Sigmoid colon (tissue), 7 donors: ENCODE measurements at regions of chr15 and their contacts with region 1.

Region 1: DNA sequence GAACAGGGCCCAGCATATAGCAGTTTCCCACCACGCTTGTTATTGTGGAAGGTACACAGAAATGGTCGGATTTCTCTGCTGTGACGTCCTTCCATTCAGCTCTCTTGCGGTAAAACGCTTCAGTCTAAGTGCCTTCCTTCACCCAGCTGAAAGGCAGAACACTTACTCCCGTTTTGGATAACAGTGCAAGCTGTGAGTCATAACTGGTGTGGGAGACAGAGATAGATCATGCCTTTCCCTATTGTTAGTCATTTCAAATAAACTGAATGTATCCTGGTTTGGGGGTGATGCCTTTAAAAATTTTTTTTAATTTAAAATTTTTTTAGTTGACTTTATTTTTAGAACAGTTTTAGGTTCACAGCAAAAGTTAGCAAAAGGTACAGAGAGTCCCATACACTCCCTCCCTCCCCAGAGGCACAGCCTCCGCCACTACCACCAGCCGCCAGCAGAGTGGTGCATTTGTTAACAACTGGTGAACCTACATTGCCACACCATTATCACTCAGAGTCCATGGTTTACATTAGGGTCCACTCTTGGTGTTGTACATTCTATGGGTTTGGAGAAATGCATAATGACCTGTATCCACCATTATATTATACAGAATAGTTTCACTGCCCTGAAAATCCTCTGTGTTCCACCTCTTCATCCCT is 94.9 kb upstream of the NSMCE3 start:
- DNase-seq: no peak
- H3K4me3 ChIP-seq: no peak overlapping the region
- H3K27ac ChIP-seq: peak overlapping the region in 3 of 4 donors; percentile 16 to 49 (median 27)
- H3K4me1 ChIP-seq: peaks cover 0 to 12% (median 3%) of the 10 kb centered on the region in 4 donors
- H3K27me3 ChIP-seq: no peaks in the 10 kb centered on the region
- CTCF ChIP-seq: peak; percentile 31 to 59 (median 52)
- EP300 ChIP-seq: no peak
- POLR2A ChIP-seq: no peak

Region 2: GRCh38 chr15:29269485-29270168 is 94.9 kb before region 1 on chr15 and contains the start of gene NSMCE3:
- intact Hi-C with region 1: loop called (anchors 5 kb)
- DNase-seq: peak; percentile 96
- H3K4me3 ChIP-seq: peak within 1 kb of the TSS; percentile 71 to 92 (median 76)
- H3K27ac ChIP-seq: peak within 1 kb of the TSS; percentile 88 to 94 (median 92)
- H3K4me1 ChIP-seq: peaks cover 0 to 34% (median 22%) of the 10 kb centered on the region in 4 donors
- H3K27me3 ChIP-seq: no peaks in the 10 kb centered on the region
- CTCF ChIP-seq: no peak
- EP300 ChIP-seq: peak in 1 of 4 donors; percentile 55
- POLR2A ChIP-seq: peak; percentile 90 to 93
- total RNA-seq, gene NSMCE3: 7.8 to 12.8 (median 10.3) TPM

Region 3: GRCh38 chr15:29398907-29399306 is 34.4 kb after region 1 on chr15:
- intact Hi-C with region 1: loop called (anchors 5 kb)
- DNase-seq: no peak
- H3K4me3 ChIP-seq: no peak overlapping the region
- H3K27ac ChIP-seq: no peak overlapping the region
- H3K4me1 ChIP-seq: peaks cover 0 to 53% (median 30%) of the 10 kb centered on the region in 4 donors
- H3K27me3 ChIP-seq: no peaks in the 10 kb centered on the region
- CTCF ChIP-seq: no peak
- EP300 ChIP-seq: no peak
- POLR2A ChIP-seq: no peak

Region 4: DNA sequence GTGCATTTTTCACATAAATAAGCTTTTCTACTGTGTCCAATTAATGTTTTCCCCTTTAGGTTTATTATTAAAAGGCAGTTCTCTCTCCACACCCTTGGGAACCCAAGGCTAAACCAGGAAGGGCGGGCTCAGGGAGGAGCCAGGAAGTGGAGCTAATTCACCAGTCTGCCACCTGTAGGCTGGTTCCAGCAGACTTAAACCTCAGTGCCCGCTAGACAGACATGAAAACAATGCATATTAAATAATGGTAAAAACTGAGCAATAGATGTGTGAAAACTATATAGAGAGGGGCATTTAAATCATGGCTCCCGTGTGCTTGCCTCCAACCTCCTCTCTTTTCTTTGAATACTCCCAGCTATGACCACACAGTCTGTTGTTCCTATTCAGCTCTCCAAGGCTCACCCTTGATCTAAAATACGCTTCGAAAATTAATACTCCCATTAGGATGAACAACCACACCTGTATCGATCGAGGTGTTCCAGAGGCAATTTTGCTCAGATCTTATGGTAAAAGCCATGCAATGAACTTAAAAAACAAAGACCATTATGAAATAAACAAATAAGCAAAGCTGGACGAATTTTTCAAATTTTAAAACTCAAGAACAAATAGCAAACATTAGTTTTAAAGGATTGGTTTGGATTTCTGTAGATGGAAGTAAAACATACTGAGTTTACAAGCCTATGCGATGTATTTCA is 204.4 kb after region 1 on chr15:
- intact Hi-C with region 1: loop called (anchors 10 kb)
- DNase-seq: no peak
- H3K4me3 ChIP-seq: no peak overlapping the region
- H3K27ac ChIP-seq: no peak overlapping the region
- H3K4me1 ChIP-seq: peaks cover 0 to 19% (median 13%) of the 10 kb centered on the region in 4 donors
- H3K27me3 ChIP-seq: peaks cover 4 to 52% (median 7%) of the 10 kb centered on the region in 3 donors
- CTCF ChIP-seq: peak in 1 of 4 experiments; percentile 8
- EP300 ChIP-seq: no peak
- POLR2A ChIP-seq: no peak

Region 5: GRCh38 chr15:30650012-30650929 is 1285.7 kb after region 1 on chr15:
- intact Hi-C with region 1: no loop called
- DNase-seq: no peak
- H3K4me3 ChIP-seq: no peak overlapping the region
- H3K27ac ChIP-seq: no peak overlapping the region
- H3K4me1 ChIP-seq: no peaks in the 10 kb centered on the region
- H3K27me3 ChIP-seq: no peaks in the 10 kb centered on the region
- CTCF ChIP-seq: no peak
- EP300 ChIP-seq: no peak
- POLR2A ChIP-seq: no peak